Heart left ventricle (tissue), 16 donors: ENCODE measurements at regions of chr12 and their contacts with region 1.

Region 1: GRCh38 chr12:47651368-47652254 is 54.2 kb downstream of the RPAP3 start:
- DNase-seq: peak; percentile 47 to 64 (median 51)
- ATAC-seq: peak; percentile 70 to 91 (median 87)
- H3K4me3 ChIP-seq: peak overlapping the region in 5 of 12 donors; percentile 8 to 45 (median 13)
- H3K27ac ChIP-seq: peak overlapping the region in 2 of 12 donors; percentile 27 to 33
- H3K4me1 ChIP-seq: peaks cover 0 to 24% (median 12%) of the 10 kb centered on the region in 12 donors
- H3K27me3 ChIP-seq: no peaks in the 10 kb centered on the region
- CTCF ChIP-seq: peak; percentile 64 to 88 (median 74)
- POLR2A ChIP-seq: no peak

Region 2: DNA sequence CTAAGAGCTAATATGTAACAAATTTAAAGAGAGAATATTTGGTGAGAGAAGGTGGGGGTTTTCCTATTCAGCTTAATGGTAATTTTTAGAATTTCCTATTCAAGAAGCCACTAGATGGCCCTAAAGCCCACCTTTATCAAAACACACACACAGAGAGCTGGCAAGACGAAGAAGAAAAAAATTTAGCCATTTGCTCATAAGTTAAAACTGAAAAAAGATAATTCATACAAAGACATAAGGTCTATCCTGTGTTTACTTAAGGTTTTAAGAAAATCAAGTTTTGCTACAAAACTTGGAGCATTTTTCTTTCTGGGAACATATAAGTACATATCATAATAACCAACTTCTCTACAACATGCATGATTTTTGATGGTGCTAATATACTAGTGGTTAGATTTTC is 619.0 kb before region 1 on chr12:
- intact Hi-C with region 1: loop called in 3 of 10 experiments (anchors 10 kb)
- DNase-seq: no peak
- ATAC-seq: peak in 3 of 4 donors; percentile 45 to 80 (median 77)
- H3K4me3 ChIP-seq: no peak overlapping the region
- H3K27ac ChIP-seq: no peak overlapping the region
- H3K4me1 ChIP-seq: peaks cover 0 to 4% (median 0%) of the 10 kb centered on the region in 12 donors
- H3K27me3 ChIP-seq: no peaks in the 10 kb centered on the region
- CTCF ChIP-seq: peak; percentile 29 to 72 (median 60)
- POLR2A ChIP-seq: no peak

Region 3: GRCh38 chr12:47767216-47767724 is 115.7 kb after region 1 on chr12:
- intact Hi-C with region 1: loop called in 3 of 10 experiments (anchors 5 kb)
- DNase-seq: peak in 4 of 5 donors; percentile 61 to 76 (median 66)
- ATAC-seq: peak in 3 of 4 donors; percentile 36 to 62 (median 37)
- H3K4me3 ChIP-seq: no peak overlapping the region
- H3K27ac ChIP-seq: no peak overlapping the region
- H3K4me1 ChIP-seq: peaks cover 0 to 49% (median 16%) of the 10 kb centered on the region in 12 donors
- H3K27me3 ChIP-seq: no peaks in the 10 kb centered on the region
- CTCF ChIP-seq: peak; percentile 48 to 75 (median 68)
- POLR2A ChIP-seq: no peak

Region 4: DNA sequence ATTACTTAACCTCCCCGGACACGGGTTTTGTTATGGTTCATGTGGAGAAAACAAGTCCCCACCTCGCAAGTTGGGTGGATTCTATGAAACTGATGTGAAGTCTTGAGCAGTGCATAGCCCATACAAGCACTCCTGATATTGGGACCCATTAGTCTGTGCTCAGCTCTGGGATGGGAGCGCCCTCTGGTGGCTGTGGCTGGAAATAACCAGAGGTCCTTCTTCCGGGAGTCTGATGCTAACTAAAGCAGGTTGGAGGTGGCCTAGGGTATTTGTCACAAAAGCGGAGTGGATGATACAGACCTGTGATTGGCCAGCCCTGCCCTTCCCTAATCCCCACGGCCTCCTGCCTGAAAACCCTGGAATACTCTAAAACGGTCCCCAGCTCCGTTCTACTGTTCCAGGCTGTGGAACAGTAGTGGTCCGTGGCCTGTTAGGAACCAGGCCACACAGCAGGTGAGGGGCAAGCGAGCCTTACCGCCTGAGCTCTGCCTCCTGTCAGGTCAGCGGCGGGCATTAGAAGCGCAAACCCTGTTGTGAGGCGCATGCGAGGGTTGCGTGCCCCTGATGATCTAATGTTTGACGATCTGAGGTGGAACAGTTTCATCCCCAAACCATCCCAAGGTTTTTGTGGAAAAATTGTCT is 127.8 kb after region 1 on chr12:
- intact Hi-C with region 1: loop called in 3 of 10 experiments (anchors 5 kb)
- DNase-seq: peak; percentile 84 to 94 (median 86)
- ATAC-seq: peak; percentile 53 to 80 (median 66)
- H3K4me3 ChIP-seq: no peak overlapping the region
- H3K27ac ChIP-seq: peak overlapping the region in 2 of 12 donors; percentile 12 to 43
- H3K4me1 ChIP-seq: peaks cover under 1 to 61% (median 50%) of the 10 kb centered on the region in 12 donors
- H3K27me3 ChIP-seq: no peaks in the 10 kb centered on the region
- CTCF ChIP-seq: peak; percentile 89 to 98 (median 92)
- POLR2A ChIP-seq: no peak

Region 5: GRCh38 chr12:47789712-47790489 is 138.3 kb after region 1 on chr12:
- intact Hi-C with region 1: no loop called
- DNase-seq: peak in 1 of 5 donors; percentile 54
- ATAC-seq: no peak
- H3K4me3 ChIP-seq: no peak overlapping the region
- H3K27ac ChIP-seq: no peak overlapping the region
- H3K4me1 ChIP-seq: peaks cover 0 to 12% (median 0%) of the 10 kb centered on the region in 12 donors
- H3K27me3 ChIP-seq: no peaks in the 10 kb centered on the region
- CTCF ChIP-seq: no peak
- POLR2A ChIP-seq: no peak

Region 6: DNA sequence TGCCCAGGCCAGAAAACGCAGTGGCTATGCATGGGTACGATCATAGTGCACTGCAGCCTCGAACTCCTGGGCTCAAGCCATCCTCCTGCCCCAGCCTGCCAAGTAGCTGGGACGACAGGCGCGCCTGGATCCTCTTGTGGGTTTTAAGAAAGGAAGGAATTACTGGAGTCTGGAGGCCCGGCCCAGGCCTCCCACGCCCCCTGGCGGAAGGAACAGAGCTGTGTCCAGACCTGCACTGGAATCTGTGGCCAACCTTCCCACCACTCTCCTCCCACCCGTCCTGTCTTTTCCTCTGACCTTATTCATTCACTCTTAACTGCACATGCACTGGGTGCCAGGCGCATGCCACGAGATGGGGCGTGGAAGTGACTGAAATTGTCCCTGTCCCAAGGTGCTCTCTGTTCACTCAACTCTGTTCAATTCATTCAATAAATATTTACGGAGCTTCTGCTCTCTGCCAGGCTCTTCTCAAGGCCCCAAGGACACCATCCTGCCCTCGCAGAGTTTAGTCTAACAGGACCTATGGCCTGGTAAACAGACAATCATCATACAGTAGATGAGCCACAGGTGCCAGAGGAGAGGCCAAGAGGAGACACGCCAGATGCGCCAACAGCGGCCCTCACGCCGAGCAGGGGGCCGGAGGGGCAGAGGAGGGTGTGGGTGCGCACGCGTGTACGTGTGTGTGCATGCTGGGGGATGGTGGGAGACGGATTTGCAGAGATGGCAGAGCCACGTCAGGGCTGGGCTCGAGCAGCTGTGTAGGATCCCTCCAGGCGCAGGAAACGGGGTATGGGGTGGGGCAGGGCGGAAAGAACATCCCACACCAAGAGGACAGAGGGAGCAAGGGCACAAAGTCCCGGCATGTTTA is 298.1 kb after region 1 on chr12:
- intact Hi-C with region 1: loop called in 1 of 10 experiments (anchors 10 kb)
- DNase-seq: peak; percentile 68 to 88 (median 80)
- ATAC-seq: peak; percentile 70 to 92 (median 89)
- H3K4me3 ChIP-seq: no peak overlapping the region
- H3K27ac ChIP-seq: no peak overlapping the region
- H3K4me1 ChIP-seq: peaks cover 0 to 17% (median 2%) of the 10 kb centered on the region in 12 donors
- H3K27me3 ChIP-seq: no peaks in the 10 kb centered on the region
- CTCF ChIP-seq: peak; percentile 76 to 91 (median 82)
- POLR2A ChIP-seq: no peak